H1 (cell line): ENCODE measurements at regions of chr10 and their contacts with region 1.

Region 1: GRCh38 chr10:94571528-94571927 is 25.9 kb downstream of the HELLS start:
- DNase-seq: no peak
- H3K4me3 ChIP-seq: no peak overlapping the region
- H3K27ac ChIP-seq: no peak overlapping the region
- H3K4me1 ChIP-seq: no peaks in the 10 kb centered on the region
- H3K27me3 ChIP-seq: peaks cover 0 to 1% (median 0%) of the 10 kb centered on the region in 4 experiments; a peak in 1 of 7 replicates
- CTCF ChIP-seq: no peak
- EP300 ChIP-seq: no peak
- POLR2A ChIP-seq: no peak
- RAD21 ChIP-seq: no peak

Region 2: GRCh38 chr10:94205396-94205831 is 366.1 kb before region 1 on chr10:
- CTCF ChIA-PET with region 1: no interaction called
- POLR2A ChIA-PET with region 1: no interaction called
- DNase-seq: no peak
- H3K4me3 ChIP-seq: no peak overlapping the region
- H3K27ac ChIP-seq: no peak overlapping the region
- H3K4me1 ChIP-seq: no peaks in the 10 kb centered on the region
- H3K27me3 ChIP-seq: no peaks in the 10 kb centered on the region
- CTCF ChIP-seq: no peak
- EP300 ChIP-seq: no peak
- POLR2A ChIP-seq: no peak
- RAD21 ChIP-seq: no peak

Region 3: GRCh38 chr10:94591461-94592205 is 20.1 kb after region 1 on chr10:
- CTCF ChIA-PET with region 1: no interaction called
- POLR2A ChIA-PET with region 1: interaction called, 13 read pairs
- DNase-seq: no peak
- H3K4me3 ChIP-seq: no peak overlapping the region
- H3K27ac ChIP-seq: no peak overlapping the region
- H3K4me1 ChIP-seq: no peaks in the 10 kb centered on the region
- H3K27me3 ChIP-seq: no peaks in the 10 kb centered on the region
- CTCF ChIP-seq: no peak
- EP300 ChIP-seq: no peak
- POLR2A ChIP-seq: no peak
- RAD21 ChIP-seq: no peak